Mammary epithelial cell (primary cell): ENCODE measurements at regions of chr7 and their contacts with region 1.

Region 1: DNA sequence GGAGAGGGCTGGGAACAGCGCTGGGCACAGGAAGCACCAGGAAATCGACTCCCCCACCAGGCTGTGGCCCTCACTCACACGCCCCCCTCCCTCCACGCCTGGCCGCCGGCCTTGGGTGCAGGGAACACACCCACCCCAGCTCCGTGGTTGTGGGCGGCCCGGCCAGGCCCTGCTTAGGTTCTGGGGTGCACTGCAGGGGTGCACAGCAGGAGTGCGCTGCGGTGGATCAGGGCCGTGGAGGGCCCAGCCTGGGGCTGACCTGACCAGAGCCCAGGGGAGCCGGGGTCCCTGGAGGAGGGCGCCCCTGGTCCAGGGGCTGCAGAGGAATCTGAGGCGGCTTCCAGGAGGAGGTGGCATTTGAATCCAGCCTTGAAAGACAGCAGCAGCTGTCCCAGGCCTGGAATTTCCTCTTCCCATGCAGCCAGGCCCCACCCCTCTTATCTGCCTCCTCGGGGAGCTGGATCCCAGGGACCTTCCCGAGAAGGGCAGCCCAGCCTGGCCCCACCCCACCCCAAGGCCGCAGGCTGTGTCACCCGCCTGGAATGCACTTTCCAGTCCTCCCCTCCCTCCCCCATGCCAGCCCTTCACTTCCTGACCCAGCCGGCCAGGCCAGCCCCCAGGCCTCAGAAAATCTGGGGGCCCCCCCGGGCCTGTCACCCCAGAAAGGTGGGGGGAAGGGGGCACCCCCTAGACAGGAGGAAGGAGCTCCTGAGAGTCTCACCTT is 18.4 kb upstream of the PDGFA start:
- DNase-seq: peak; percentile 87
- H3K4me3 ChIP-seq: peak overlapping the region in 2 of 3 experiments; percentile 10 to 53
- H3K27ac ChIP-seq: peak overlapping the region; percentile 85
- H3K4me1 ChIP-seq: peaks cover 44% of the 10 kb centered on the region
- H3K27me3 ChIP-seq: no peaks in the 10 kb centered on the region
- CTCF ChIP-seq: no peak

Region 2: DNA sequence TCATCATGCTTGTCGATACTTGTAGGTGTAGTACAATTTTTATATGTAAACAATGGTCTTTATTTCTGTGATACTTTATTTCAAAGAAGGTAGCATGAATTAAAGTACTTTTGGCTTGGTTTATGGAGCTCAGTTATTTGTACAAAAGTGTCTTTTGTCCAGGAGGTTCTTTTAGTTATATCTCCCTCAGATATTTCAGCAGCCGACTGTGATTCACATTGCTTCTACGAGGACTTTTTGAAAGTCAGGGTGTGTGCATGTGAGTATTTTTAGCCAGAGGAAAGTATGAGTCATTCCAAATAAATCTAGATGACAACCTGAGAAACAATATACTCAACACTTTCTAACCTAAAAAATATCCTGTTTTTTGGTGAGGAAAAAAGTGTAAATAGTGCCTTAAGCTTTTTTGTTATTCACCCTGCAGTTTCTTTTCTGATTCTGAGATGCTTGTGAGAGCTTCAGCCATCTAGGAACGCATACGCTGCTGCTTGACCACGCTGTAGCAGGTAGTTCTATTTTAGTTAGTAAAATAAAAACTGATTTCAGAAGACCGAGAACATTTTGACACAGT is 293.6 kb after region 1 on chr7:
- CTCF ChIA-PET with region 1: no interaction called
- dilution Hi-C with region 1: no loop called
- in situ Hi-C with region 1: no loop called
- intact Hi-C with region 1: loop called (anchors 5 kb)
- DNase-seq: peak; percentile 93
- H3K4me3 ChIP-seq: peak overlapping the region in 2 of 3 experiments; percentile 36 to 41
- H3K27ac ChIP-seq: peak overlapping the region; percentile 100
- H3K4me1 ChIP-seq: peaks cover 50% of the 10 kb centered on the region
- H3K27me3 ChIP-seq: no peaks in the 10 kb centered on the region
- CTCF ChIP-seq: no peak